ENCODE measurements at regions of chr3 and their contacts with region 1.

Region 1: DNA sequence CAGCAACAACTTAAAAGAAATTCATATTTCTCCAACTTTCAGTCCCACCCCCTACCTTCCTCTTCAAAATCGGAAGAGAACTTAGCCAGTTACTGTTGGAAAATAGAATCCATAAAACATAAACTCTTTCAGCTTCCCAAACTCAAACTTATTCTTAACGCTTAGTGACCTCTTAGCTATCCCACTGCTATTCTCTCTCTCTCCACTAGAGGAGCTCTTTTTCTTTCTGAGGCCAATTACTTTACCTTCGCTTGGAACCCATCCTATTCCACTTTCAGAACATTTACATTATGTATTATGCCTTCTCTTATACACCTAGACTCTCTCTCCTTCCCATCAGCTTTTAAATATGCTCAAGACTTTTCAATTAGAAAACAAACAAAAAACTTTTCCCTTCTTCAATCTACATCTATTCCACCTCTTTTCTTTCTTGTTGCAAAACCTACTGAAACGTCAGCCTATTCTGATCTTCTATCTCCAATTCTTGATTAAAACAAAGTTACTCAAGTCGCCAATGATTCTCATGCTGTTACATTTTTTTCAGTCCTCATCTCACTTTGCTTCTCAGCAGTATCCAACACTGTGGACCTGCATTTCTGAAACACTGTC is 13.4 kb upstream of the GHSR start:
- DNase-seq: no peak
- H3K4me3 Mint-ChIP-seq: no peak overlapping the region
- H3K27ac Mint-ChIP-seq: no peak overlapping the region
- H3K4me1 Mint-ChIP-seq: no peaks in the 10 kb centered on the region
- H3K27me3 Mint-ChIP-seq: peaks cover 2% of the 10 kb centered on the region

Region 2: DNA sequence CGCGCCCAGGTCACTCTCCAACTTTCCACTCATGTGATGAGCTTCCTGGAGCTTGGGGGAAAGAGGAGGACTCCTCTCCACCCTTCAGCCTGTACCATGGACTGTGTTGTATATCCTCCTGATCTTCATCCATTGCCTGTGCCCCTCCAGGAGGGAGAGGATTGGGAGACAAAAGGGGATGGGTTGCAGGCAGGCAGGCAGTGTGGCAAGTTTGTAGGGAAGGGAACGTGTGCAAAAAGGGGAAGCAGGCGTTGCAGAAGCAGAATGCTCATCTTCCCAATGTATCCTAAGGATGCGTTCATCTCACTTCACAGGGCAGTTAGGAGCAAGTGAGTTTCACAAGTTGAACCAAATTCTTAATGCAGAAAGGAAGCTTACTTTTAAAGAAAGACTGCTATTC is 14.7 kb after region 1 on chr3:
- intact Hi-C with region 1: loop called (anchors 2 kb)
- DNase-seq: no peak
- H3K4me3 Mint-ChIP-seq: peak overlapping the region; percentile 16
- H3K27ac Mint-ChIP-seq: no peak overlapping the region
- H3K4me1 Mint-ChIP-seq: peaks cover 22% of the 10 kb centered on the region
- H3K27me3 Mint-ChIP-seq: peaks cover 7% of the 10 kb centered on the region

Region 3: DNA sequence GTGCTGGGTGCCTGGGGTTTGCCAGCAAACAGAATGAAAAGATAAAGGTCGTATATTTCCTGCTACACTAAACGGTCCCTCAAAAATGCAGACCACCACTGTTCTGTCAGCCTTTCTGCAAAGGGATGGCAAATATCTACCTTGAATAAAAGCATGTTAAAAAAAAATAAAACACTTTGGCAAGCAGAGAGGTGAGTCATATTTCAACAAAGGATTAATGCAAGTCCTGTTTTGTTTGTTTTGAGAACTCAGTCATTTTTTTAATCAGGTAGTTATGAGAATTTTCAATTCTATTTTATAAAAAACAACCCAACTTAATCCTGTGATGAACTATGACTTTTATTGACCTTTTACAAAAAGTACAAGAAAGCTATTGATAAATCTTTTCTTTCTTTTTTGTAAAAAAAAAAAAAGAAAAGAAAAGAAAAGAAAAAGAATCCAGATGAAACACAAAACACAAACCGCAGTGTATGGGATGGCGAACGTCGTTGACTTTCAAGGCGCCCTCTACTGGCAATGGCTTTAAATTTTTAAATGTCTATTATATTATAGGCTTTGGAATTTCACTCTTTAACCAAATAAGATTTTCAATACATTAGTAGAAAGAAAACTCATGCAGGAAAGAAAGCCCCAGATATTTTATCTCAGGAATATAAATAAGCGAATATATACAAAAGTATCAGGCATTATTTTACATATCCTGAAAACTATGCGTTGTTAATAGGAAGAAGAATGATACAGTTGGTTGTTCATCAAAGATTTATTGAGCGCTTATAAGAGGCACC is 161.5 kb after region 1 on chr3:
- intact Hi-C with region 1: loop called (anchors 1 kb)
- DNase-seq: no peak
- H3K4me3 Mint-ChIP-seq: peak overlapping the region; percentile 50
- H3K27ac Mint-ChIP-seq: no peak overlapping the region
- H3K4me1 Mint-ChIP-seq: peaks cover 25% of the 10 kb centered on the region
- H3K27me3 Mint-ChIP-seq: peaks cover 2% of the 10 kb centered on the region